ENCODE measurements at regions of chr3 and their contacts with region 1.

Region 1: GRCh38 chr3:63961891-63962290 is 49.7 kb upstream of the SCAANT1 start:
- DNase-seq: no peak
- H3K4me3 ChIP-seq: no peak overlapping the region
- H3K27ac ChIP-seq: no peak overlapping the region
- H3K4me1 ChIP-seq: peaks cover 4% of the 10 kb centered on the region
- H3K27me3 ChIP-seq: no peaks in the 10 kb centered on the region
- CTCF ChIP-seq: peak; percentile 56

Region 2: DNA sequence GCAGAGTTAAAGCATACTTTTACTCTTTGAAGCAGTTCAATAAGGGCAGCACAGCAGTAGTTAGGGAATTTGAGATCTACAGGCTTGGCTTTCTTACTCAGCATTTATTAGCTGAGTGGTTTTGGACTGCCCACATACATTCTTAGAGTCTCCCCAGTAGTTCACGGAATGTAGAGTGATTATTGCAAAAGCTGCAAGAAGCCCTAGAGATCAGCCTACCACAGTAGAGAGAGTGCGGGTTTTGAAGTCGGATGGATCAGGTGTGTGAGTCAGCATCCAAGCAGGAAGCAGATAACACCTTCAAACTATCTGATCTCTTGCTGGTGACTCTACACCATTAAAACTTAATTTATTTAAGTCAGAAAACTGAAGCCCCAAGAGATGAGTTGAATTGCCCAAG is 511.9 kb before region 1 on chr3:
- intact Hi-C with region 1: no loop called
- DNase-seq: no peak
- H3K4me3 ChIP-seq: no peak overlapping the region
- H3K27ac ChIP-seq: peak overlapping the region; percentile 66
- H3K4me1 ChIP-seq: peaks cover 3% of the 10 kb centered on the region
- H3K27me3 ChIP-seq: no peaks in the 10 kb centered on the region
- CTCF ChIP-seq: no peak

Region 3: DNA sequence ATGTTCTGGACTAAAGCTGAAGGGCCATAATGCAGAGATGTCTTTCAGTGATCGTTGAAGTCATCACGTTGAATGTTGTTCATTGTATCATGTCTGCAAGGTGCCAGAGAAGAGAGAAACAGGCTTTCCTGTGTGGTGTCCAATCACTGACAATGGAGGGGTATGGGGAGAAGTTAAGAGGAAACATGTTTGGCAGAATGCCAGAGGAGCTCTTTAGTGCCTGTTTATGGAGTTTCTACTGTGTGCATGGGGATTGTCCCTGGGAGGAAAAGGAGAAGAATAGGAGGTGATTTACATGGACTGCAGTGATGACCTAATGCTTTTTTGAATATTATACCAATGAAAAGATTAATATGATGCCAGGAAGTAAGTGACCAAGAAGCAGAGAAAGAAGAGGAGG is 61.4 kb before region 1 on chr3:
- intact Hi-C with region 1: no loop called
- DNase-seq: no peak
- H3K4me3 ChIP-seq: no peak overlapping the region
- H3K27ac ChIP-seq: no peak overlapping the region
- H3K4me1 ChIP-seq: no peaks in the 10 kb centered on the region
- H3K27me3 ChIP-seq: no peaks in the 10 kb centered on the region
- CTCF ChIP-seq: no peak

Region 4: GRCh38 chr3:63993653-63994079 is 31.8 kb after region 1 on chr3:
- intact Hi-C with region 1: loop called (anchors 2 kb)
- DNase-seq: peak; percentile 66
- H3K4me3 ChIP-seq: no peak overlapping the region
- H3K27ac ChIP-seq: no peak overlapping the region
- H3K4me1 ChIP-seq: no peaks in the 10 kb centered on the region
- H3K27me3 ChIP-seq: no peaks in the 10 kb centered on the region
- CTCF ChIP-seq: peak; percentile 92